ENCODE measurements at regions of chr2 and their contacts with region 1.

Region 1: GRCh38 chr2:233976690-233977294 is 59.6 kb downstream of the TRPM8 start:
- DNase-seq: peak; percentile 20
- H3K4me3 Mint-ChIP-seq: no peak overlapping the region
- H3K27ac Mint-ChIP-seq: no peak overlapping the region
- H3K4me1 Mint-ChIP-seq: peaks cover 12% of the 10 kb centered on the region
- H3K27me3 Mint-ChIP-seq: no peaks in the 10 kb centered on the region

Region 2: GRCh38 chr2:234091432-234091879 is 114.7 kb after region 1 on chr2:
- CTCF ChIA-PET with region 1: no interaction called
- intact Hi-C with region 1: no loop called
- DNase-seq: no peak
- H3K4me3 Mint-ChIP-seq: no peak overlapping the region
- H3K27ac Mint-ChIP-seq: no peak overlapping the region
- H3K4me1 Mint-ChIP-seq: peaks cover 2% of the 10 kb centered on the region
- H3K27me3 Mint-ChIP-seq: no peaks in the 10 kb centered on the region

Region 3: DNA sequence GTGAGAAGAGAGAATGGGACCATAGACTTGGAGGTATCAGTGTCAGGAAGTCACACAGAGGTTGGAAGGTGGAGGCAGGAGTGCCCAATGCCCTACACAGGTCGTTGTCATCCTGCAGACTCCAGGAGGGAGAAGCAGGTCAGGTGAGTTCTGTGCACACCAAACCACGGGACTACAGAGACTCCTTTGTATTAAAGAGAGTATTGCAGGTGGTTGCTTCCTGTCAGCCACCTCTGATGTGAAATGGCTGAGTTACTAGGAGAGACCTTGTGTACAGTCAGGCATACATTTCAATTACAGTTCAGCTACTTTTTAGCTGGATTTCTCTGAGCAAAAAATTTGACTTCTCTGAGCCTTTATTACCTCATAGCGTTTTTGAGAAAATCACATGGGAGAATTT is 125.3 kb after region 1 on chr2:
- CTCF ChIA-PET with region 1: interaction called, 3 read pairs
- intact Hi-C with region 1: loop called (anchors 5 kb)
- DNase-seq: peak; percentile 22
- H3K4me3 Mint-ChIP-seq: no peak overlapping the region
- H3K27ac Mint-ChIP-seq: no peak overlapping the region
- H3K4me1 Mint-ChIP-seq: peaks cover 21% of the 10 kb centered on the region
- H3K27me3 Mint-ChIP-seq: no peaks in the 10 kb centered on the region

Region 4: GRCh38 chr2:234164493-234165413 is 188.0 kb after region 1 on chr2:
- CTCF ChIA-PET with region 1: no interaction called
- intact Hi-C with region 1: no loop called
- DNase-seq: peak; percentile 55
- H3K4me3 Mint-ChIP-seq: no peak overlapping the region
- H3K27ac Mint-ChIP-seq: no peak overlapping the region
- H3K4me1 Mint-ChIP-seq: peaks cover 18% of the 10 kb centered on the region
- H3K27me3 Mint-ChIP-seq: no peaks in the 10 kb centered on the region

Region 5: GRCh38 chr2:234500394-234501006 is 523.7 kb after region 1 on chr2:
- CTCF ChIA-PET with region 1: interaction called, 3 read pairs
- intact Hi-C with region 1: loop called (anchors 1 kb)
- DNase-seq: peak; percentile 83
- H3K4me3 Mint-ChIP-seq: no peak overlapping the region
- H3K27ac Mint-ChIP-seq: no peak overlapping the region
- H3K4me1 Mint-ChIP-seq: peaks cover 26% of the 10 kb centered on the region
- H3K27me3 Mint-ChIP-seq: no peaks in the 10 kb centered on the region

Region 6: GRCh38 chr2:234544659-234545611 is 568.1 kb after region 1 on chr2:
- CTCF ChIA-PET with region 1: interaction called, 3 read pairs
- intact Hi-C with region 1: loop called (anchors 1 kb)
- DNase-seq: peak; percentile 85
- H3K4me3 Mint-ChIP-seq: no peak overlapping the region
- H3K27ac Mint-ChIP-seq: no peak overlapping the region
- H3K4me1 Mint-ChIP-seq: no peaks in the 10 kb centered on the region
- H3K27me3 Mint-ChIP-seq: peaks cover 4% of the 10 kb centered on the region